IMR-90 (cell line): ENCODE measurements at regions of chr12 and their contacts with region 1.

Region 1: GRCh38 chr12:95733141-95733825 is 57.3 kb downstream of the NTN4 start:
- DNase-seq: peak; percentile 95
- ATAC-seq: peak; percentile 88
- H3K4me3 ChIP-seq: no peak overlapping the region
- H3K27ac ChIP-seq: peak overlapping the region; percentile 46; the same call in 1 of the 2 replicates
- H3K4me1 ChIP-seq: peaks cover 10% of the 10 kb centered on the region; the same call in 1 of the 2 replicates
- H3K27me3 ChIP-seq: no peaks in the 10 kb centered on the region
- CTCF ChIP-seq: no peak
- POLR2A ChIP-seq: no peak
- RAD21 ChIP-seq: no peak

Region 2: DNA sequence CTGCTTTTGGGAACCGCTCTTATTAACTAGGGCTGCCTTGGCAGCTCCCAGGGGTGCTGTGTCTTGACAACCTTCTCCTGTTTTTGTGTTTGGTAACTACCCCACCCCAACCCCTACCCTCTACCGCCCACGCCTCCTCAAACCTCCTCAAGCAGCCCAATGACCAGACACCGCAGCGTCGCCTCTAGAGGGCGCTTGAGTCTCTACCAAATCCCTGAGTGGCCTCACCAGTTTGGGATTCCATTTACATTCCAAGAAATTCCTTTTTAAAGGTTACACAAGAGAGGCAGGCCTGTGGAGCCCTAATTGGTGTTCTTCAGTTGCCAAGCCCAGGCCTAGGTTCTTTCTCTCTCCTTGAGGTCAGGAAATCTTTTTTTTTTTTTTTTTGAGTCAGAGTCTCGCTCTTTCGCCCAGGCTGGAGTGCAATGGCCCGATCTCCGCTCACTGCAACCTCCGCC is 109.7 kb before region 1 on chr12:
- CTCF ChIA-PET with region 1: no interaction called
- POLR2A ChIA-PET with region 1: no interaction called
- dilution Hi-C with region 1: no loop called
- in situ Hi-C with region 1: no loop called
- intact Hi-C with region 1: loop called (anchors 5 kb)
- DNase-seq: peak; percentile 89
- ATAC-seq: peak; percentile 95
- H3K4me3 ChIP-seq: no peak overlapping the region
- H3K27ac ChIP-seq: peak overlapping the region; percentile 31; the same call in 1 of the 2 replicates
- H3K4me1 ChIP-seq: peaks cover 3% of the 10 kb centered on the region
- H3K27me3 ChIP-seq: no peaks in the 10 kb centered on the region
- CTCF ChIP-seq: peak; percentile 77
- POLR2A ChIP-seq: no peak
- RAD21 ChIP-seq: peak; percentile 73